Heart right ventricle (tissue), 16 donors: ENCODE measurements at regions of chr3 and their contacts with region 1.

Region 1: DNA sequence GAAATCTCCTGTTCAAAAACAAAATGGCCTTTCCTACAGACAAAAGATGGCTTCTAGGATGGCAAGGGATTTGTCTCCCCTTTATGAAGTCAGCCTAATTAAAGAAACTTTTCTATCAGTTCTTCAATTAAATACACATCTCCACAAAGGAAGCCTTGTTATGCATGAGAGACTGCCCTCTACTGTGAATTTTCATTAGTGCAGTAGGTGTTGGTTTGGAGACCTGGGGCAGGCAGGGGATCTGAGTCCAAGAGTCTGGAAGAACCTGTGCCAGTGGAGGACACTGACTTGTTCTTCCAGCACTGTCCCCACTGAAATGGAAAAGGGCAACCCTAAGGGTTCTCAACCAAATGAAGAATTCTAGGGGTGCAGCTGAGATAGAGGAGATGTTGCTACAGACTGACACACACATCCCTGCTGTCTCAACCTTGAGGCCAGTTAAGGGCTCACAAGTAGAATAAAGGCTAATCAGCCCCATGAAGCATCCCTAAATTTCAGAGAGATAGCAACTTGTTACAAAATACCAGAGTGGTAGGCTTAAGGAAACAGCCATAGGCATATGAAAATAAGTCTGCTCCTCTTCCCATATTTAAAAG is 174.0 kb upstream of the PRICKLE2 start:
- DNase-seq: peak in 1 of 2 donors; percentile 64
- ATAC-seq: peak; percentile 58 to 80 (median 70)
- H3K4me3 ChIP-seq: no peak overlapping the region
- H3K27ac ChIP-seq: no peak overlapping the region
- H3K4me1 ChIP-seq: no peaks in the 10 kb centered on the region
- H3K27me3 ChIP-seq: no peaks in the 10 kb centered on the region
- CTCF ChIP-seq: peak; percentile 71 to 88 (median 84)

Region 2: GRCh38 chr3:64176461-64176996 is 222.8 kb before region 1 on chr3:
- intact Hi-C with region 1: loop called in 3 of 10 experiments (anchors 10 kb)
- DNase-seq: no peak
- ATAC-seq: no peak
- H3K4me3 ChIP-seq: no peak overlapping the region
- H3K27ac ChIP-seq: no peak overlapping the region
- H3K4me1 ChIP-seq: peaks cover 0 to 18% (median 0%) of the 10 kb centered on the region in 9 donors
- H3K27me3 ChIP-seq: no peaks in the 10 kb centered on the region
- CTCF ChIP-seq: no peak

Region 3: GRCh38 chr3:64224826-64225610 is 174.3 kb before region 1 on chr3 and contains the start of gene PRICKLE2:
- intact Hi-C with region 1: loop called in 3 of 10 experiments (anchors 5 to 10 kb)
- DNase-seq: peak; percentile 75 to 89
- ATAC-seq: peak; percentile 75 to 88 (median 84)
- H3K4me3 ChIP-seq: peak within 1 kb of the TSS in 9 of 10 donors; percentile 6 to 54 (median 47)
- H3K27ac ChIP-seq: peak within 1 kb of the TSS; percentile 27 to 89 (median 78)
- H3K4me1 ChIP-seq: peaks cover 11 to 80% (median 59%) of the 10 kb centered on the region in 9 donors
- H3K27me3 ChIP-seq: no peaks in the 10 kb centered on the region
- CTCF ChIP-seq: peak in 5 of 9 donors; percentile 16 to 54 (median 39)
- total RNA-seq, gene PRICKLE2: 6.4 to 12.2 (median 8.4) TPM

Region 4: GRCh38 chr3:64267721-64268604 is 131.3 kb before region 1 on chr3:
- intact Hi-C with region 1: loop called in 4 of 10 experiments (anchors 5 to 10 kb)
- DNase-seq: peak; percentile 57 to 76
- ATAC-seq: peak; percentile 88 to 94 (median 91)
- H3K4me3 ChIP-seq: peak overlapping the region; percentile 61 to 88 (median 78)
- H3K27ac ChIP-seq: peak overlapping the region; percentile 55 to 93 (median 88)
- H3K4me1 ChIP-seq: peaks cover 5 to 51% (median 31%) of the 10 kb centered on the region in 9 donors
- H3K27me3 ChIP-seq: peaks cover 0 to 7% (median 0%) of the 10 kb centered on the region in 7 donors
- CTCF ChIP-seq: peak in 2 of 9 donors; percentile 15 to 22

Region 5: GRCh38 chr3:64484289-64484992 is 85.1 kb after region 1 on chr3:
- intact Hi-C with region 1: loop called in 6 of 10 experiments (anchors 2 to 10 kb)
- DNase-seq: peak; percentile 73 to 80
- ATAC-seq: peak; percentile 89 to 95 (median 92)
- H3K4me3 ChIP-seq: no peak overlapping the region
- H3K27ac ChIP-seq: no peak overlapping the region
- H3K4me1 ChIP-seq: peaks cover 0 to 18% (median 0%) of the 10 kb centered on the region in 9 donors
- H3K27me3 ChIP-seq: peaks cover 0 to 16% (median 4%) of the 10 kb centered on the region in 7 donors
- CTCF ChIP-seq: peak; percentile 73 to 96 (median 88)